ENCODE measurements at regions of chr2 and their contacts with region 1.

Region 1: DNA sequence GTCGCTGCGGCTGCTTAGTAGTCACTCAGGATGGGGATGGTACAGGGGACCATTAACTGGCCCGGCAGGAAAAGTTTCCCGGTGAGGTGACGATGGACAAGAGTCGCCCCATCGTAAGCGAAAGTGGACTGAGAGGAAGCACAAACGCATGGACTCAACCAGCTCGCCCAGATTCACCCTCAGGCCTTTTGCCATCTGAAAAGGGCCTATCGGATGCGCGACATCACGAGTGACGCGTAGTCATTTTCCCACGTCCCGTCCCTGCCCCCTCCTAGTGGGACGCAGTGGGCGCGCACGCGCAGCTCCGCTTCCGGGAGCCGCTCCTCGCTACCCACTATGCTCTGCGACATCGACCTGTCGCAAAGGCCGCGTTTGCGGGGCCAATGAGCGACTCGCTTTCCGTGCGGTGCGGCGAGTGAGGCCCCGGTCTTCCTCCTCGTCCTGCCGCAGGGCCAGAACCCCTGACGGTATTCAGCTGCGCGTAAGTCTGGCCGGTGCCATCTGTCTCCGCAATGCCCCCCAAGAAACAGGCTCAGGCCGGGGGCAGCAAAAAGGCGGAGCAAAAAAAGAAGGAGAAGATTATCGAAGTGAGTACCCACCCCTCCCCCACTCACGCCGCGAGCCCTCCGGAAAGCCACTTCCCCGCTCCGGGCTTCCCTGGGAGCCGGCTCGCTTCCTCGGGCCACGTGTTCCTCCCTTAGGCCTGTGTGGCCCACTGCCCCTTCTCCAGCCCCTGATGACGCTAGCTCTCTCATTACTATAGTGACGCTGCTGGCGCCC is at the start of gene ZC3H15:
- DNase-seq: peak; percentile 97
- H3K4me3 Mint-ChIP-seq: peak within 1 kb of the TSS; percentile 98
- H3K27ac Mint-ChIP-seq: peak within 1 kb of the TSS; percentile 91
- H3K4me1 Mint-ChIP-seq: peaks cover 53% of the 10 kb centered on the region
- H3K27me3 Mint-ChIP-seq: no peaks in the 10 kb centered on the region
- total RNA-seq, gene ZC3H15: 63.3 to 67.5 TPM

Region 2: DNA sequence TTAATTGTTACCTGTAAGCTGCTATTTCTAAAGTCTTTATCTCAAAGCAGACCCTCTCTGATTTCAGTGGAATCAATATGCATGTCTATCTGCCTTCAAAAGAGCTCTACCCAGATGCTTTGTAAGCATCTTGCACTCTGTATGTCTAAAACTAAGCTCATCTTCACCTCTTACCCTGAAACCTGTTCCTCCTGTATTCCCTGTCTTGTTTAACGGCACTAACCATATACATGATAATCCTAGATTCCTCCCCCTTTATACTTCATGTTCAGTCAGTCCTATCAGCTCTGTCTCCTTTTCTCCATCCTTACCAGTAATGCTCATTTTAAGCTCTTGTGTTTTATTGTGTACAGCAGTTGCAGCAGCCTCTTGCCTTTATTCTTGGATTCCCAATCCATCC is 12.8 kb after region 1 on chr2:
- CTCF ChIA-PET with region 1: interaction called, 17 read pairs
- POLR2A ChIA-PET with region 1: interaction called, 12 read pairs
- DNase-seq: no peak
- H3K4me3 Mint-ChIP-seq: no peak overlapping the region
- H3K27ac Mint-ChIP-seq: no peak overlapping the region
- H3K4me1 Mint-ChIP-seq: peaks cover 12% of the 10 kb centered on the region
- H3K27me3 Mint-ChIP-seq: no peaks in the 10 kb centered on the region

Region 3: GRCh38 chr2:186589612-186590349 is 103.7 kb after region 1 on chr2 and contains the start of gene ITGAV:
- CTCF ChIA-PET with region 1: interaction called, 10 read pairs
- POLR2A ChIA-PET with region 1: interaction called, 27 read pairs
- DNase-seq: peak; percentile 87
- H3K4me3 Mint-ChIP-seq: peak within 1 kb of the TSS; percentile 83
- H3K27ac Mint-ChIP-seq: peak within 1 kb of the TSS; percentile 73
- H3K4me1 Mint-ChIP-seq: peaks cover 32% of the 10 kb centered on the region
- H3K27me3 Mint-ChIP-seq: no peaks in the 10 kb centered on the region
- total RNA-seq, gene ITGAV: 9.8 to 10.2 TPM

Measured in activated CD4-positive, alpha-beta memory T cell treated with anti-CD3 and anti-CD28 coated beads, Interleukin-2, amount 10 ng/mL, durations not matched to agents 7 days and 5 days (primary cell).